OCI-LY7 (cell line): ENCODE measurements at regions of chr4 and their contacts with region 1.

Region 1: GRCh38 chr4:78355306-78355705 is 196.3 kb upstream of the ANXA3 start:
- DNase-seq: no peak
- H3K4me3 ChIP-seq: no peak overlapping the region
- H3K27ac ChIP-seq: no peak overlapping the region
- H3K4me1 ChIP-seq: no peaks in the 10 kb centered on the region
- CTCF ChIP-seq: no peak

Region 2: DNA sequence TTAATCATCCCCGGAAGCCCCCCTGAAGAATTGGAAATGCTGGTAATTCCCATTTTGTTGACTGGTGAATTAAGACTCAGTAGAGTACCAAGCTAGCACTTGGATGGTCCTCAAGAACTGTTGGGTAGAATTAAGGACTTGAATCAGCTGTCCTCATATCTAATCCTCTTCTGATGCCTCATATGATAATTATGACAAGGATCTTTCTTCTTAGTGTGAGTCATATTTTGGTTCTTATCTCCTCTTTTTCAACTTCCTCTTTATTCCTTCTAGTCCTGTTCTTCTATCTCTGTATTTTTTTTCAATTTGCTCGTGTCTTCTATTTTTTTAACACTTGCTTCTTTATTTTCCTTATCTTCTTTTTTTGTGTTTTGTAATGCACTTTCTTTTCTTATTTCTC is 10.1 kb before region 1 on chr4:
- CTCF ChIA-PET with region 1: no interaction called
- POLR2A ChIA-PET with region 1: interaction called, 11 read pairs
- intact Hi-C with region 1: no loop called
- DNase-seq: no peak
- H3K4me3 ChIP-seq: no peak overlapping the region
- H3K27ac ChIP-seq: no peak overlapping the region
- H3K4me1 ChIP-seq: no peaks in the 10 kb centered on the region
- CTCF ChIP-seq: no peak